KBM-7 (cell line): ENCODE measurements at regions of chr13 and their contacts with region 1.

Region 1: DNA sequence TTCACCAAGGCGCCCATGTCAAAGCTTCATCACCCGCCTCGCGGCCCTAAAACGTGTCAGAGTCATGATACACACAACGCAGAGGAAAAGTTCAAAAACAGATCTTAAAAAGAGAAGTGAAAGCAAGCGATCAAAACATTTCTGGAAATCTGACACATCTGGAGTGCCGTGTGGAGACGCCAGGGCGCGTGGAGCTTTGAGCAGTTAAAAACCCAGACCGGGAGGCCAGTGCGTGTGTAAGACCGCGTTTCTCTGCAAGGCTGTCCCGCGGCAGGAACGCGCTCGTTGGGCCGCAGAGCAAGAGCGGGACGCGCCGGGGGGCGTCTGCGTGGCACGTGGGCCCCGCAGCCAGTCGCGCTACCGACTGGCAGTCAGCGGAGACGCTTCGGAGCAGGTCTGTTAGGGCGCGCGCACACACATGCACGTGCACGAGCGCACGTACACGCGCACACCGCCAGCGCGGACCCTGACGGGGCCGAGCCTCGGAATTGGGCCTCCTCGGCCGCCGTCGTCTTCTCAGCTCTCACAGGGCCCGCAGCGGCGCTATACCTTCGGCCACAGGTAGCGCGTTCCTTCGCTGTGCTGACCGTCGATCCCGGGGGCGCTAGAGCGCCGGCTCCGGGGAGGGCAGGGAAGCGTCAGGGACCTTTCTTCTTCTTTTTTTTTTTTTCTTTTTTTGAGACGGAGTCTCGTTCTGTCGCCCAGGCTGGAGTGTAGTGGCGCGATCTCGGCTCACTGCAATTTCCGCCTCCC is 35.8 kb downstream of the RNF6 start:
- DNase-seq: peak; percentile 94

Region 2: DNA sequence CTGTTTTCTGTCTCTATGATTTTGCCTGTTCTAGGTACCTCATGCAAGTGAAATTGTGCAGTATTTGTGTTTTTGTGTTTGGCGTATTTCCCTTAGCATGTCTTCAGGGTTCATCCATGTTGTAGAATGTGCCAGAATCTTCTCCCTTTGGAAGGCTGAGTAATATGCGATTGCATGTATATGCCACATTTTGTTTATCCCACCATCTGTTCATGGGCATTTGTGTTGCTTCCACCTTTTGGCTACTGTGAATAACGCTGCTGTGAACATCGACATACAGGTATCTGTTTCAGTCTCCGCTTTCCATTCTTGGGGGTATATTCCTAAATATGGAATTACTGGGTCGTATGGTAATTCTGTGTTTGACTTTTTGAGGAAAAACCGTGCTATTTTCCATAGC is 624.5 kb before region 1 on chr13:
- in situ Hi-C with region 1: no loop called
- DNase-seq: no peak

Region 3: DNA sequence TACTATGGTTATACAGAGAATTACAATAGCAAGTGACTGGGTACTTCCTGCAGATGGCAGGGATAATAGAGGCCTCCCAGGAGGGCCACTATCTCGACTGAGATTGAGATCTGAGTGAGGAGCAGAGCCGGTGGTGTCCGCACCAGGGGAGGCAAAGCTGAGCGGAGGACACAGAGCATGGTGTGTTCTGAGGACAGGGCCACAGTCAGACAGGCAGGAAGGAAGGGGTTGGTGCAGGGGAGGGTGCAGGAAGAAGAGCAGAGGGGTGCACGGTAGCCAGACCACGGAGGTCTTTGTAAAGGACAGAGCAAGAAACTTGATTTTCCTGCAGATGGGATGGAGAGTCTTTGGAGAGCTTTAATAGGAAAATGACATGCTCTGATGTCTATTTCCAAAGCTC is 286.8 kb before region 1 on chr13:
- in situ Hi-C with region 1: no loop called
- DNase-seq: no peak

Region 4: GRCh38 chr13:26698392-26699196 is 512.3 kb after region 1 on chr13:
- in situ Hi-C with region 1: loop called (anchors 25 kb)
- DNase-seq: peak; percentile 86

Region 5: GRCh38 chr13:26771796-26772195 is 585.5 kb after region 1 on chr13:
- in situ Hi-C with region 1: no loop called
- DNase-seq: no peak